ENCODE measurements at regions of chr5 and their contacts with region 1.

Region 1: DNA sequence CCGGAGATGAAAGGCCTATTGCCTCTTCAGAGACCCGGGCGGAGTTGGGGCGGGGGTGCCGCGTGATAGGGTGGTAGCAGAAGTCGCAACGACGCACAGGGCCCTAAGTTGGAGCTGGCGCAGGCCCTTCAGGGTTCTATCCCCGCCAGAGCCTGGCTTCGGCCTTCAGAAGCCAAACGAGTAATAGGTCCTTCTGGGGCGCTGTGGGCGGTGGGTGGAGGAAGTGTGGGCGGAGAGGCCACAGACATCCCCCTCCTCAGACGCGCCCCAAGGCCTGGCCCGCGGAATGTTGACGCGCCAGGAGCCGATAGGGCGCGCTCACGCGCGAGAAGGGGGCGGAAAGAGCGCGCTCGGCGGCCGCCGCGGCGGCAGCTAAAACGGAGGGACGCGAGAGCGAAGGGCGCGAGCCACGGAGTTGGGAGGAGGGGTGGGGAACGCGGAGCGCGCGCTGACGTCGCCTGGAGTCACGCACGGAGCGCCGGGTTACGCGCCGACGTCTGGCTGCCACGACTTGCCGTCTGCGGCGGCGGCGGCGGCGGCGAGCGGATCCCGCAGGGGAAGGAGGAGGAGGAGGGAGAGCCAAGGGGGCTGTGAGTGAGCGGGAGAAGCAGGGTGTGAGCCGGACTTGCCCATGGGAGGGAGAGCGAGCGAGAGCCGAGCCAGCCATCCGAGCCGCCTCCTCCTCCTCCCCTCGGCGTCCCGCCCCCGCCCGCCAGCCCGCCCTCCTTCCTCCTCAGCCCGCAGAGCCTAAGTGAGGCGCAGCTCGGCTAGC is 6.4 kb upstream of the PURA start:
- DNase-seq: peak; percentile 88 to 99 (median 93)
- ATAC-seq: peak; percentile 85
- H3K4me3 ChIP-seq: peak overlapping the region; percentile 63 to 81
- H3K4me3 Mint-ChIP-seq: peak overlapping the region; percentile 96
- H3K27ac ChIP-seq: peak overlapping the region; percentile 96 to 98
- H3K27ac Mint-ChIP-seq: peak overlapping the region; percentile 98
- H3K4me1 ChIP-seq: peaks cover 45% of the 10 kb centered on the region
- H3K4me1 Mint-ChIP-seq: peaks cover 48% of the 10 kb centered on the region
- H3K27me3 ChIP-seq: no peaks in the 10 kb centered on the region
- H3K27me3 Mint-ChIP-seq: peaks cover 20% of the 10 kb centered on the region
- CTCF ChIP-seq: no peak

Region 2: GRCh38 chr5:139844472-139845145 is 262.9 kb before region 1 on chr5:
- CTCF ChIA-PET with region 1: no interaction called
- POLR2A ChIA-PET with region 1: no interaction called
- intact Hi-C with region 1: loop called (anchors 5 kb)
- DNase-seq: peak; percentile 50 to 83 (median 77)
- ATAC-seq: peak; percentile 24
- H3K4me3 ChIP-seq: no peak overlapping the region
- H3K4me3 Mint-ChIP-seq: no peak overlapping the region
- H3K27ac ChIP-seq: no peak overlapping the region
- H3K27ac Mint-ChIP-seq: no peak overlapping the region
- H3K4me1 ChIP-seq: no peaks in the 10 kb centered on the region
- H3K4me1 Mint-ChIP-seq: peaks cover 15% of the 10 kb centered on the region
- H3K27me3 ChIP-seq: no peaks in the 10 kb centered on the region
- H3K27me3 Mint-ChIP-seq: peaks cover 18% of the 10 kb centered on the region
- CTCF ChIP-seq: peak; percentile 76

Region 3: GRCh38 chr5:140054086-140054689 is 53.3 kb before region 1 on chr5:
- CTCF ChIA-PET with region 1: no interaction called
- POLR2A ChIA-PET with region 1: no interaction called
- intact Hi-C with region 1: no loop called
- DNase-seq: no peak
- ATAC-seq: no peak
- H3K4me3 ChIP-seq: no peak overlapping the region
- H3K4me3 Mint-ChIP-seq: no peak overlapping the region
- H3K27ac ChIP-seq: no peak overlapping the region
- H3K27ac Mint-ChIP-seq: no peak overlapping the region
- H3K4me1 ChIP-seq: no peaks in the 10 kb centered on the region
- H3K4me1 Mint-ChIP-seq: no peaks in the 10 kb centered on the region
- H3K27me3 ChIP-seq: peaks cover 3 to 4% of the 10 kb centered on the region in 2 experiments
- H3K27me3 Mint-ChIP-seq: peaks cover 25% of the 10 kb centered on the region
- CTCF ChIP-seq: no peak

Region 4: DNA sequence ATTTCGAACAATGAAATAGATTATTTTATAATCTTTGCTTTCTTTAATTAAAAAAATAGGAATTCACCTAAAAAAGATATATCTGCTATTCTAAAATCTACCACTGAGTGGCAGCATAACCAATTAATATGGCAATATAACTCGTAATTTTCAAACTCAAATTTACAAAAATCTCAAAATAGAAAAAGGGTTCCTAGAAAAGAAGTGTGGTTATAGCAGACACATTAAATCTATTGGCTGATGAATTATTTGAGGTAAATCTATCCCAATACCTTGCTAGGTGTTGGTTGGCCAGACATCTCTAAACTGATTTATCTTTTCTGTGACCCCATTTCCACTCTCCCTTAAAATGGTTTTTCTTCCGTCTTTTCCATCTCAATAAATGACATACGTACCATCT is 34.2 kb before region 1 on chr5:
- CTCF ChIA-PET with region 1: interaction called, 18 read pairs
- POLR2A ChIA-PET with region 1: interaction called, 3 read pairs
- intact Hi-C with region 1: loop called (anchors 2 to 5 kb)
- DNase-seq: peak in 2 of 9 experiments; percentile 56 to 62
- ATAC-seq: no peak
- H3K4me3 ChIP-seq: no peak overlapping the region
- H3K4me3 Mint-ChIP-seq: no peak overlapping the region
- H3K27ac ChIP-seq: no peak overlapping the region
- H3K27ac Mint-ChIP-seq: no peak overlapping the region
- H3K4me1 ChIP-seq: no peaks in the 10 kb centered on the region
- H3K4me1 Mint-ChIP-seq: no peaks in the 10 kb centered on the region
- H3K27me3 ChIP-seq: peaks cover 0 to 12% of the 10 kb centered on the region in 2 experiments
- H3K27me3 Mint-ChIP-seq: peaks cover 28% of the 10 kb centered on the region
- CTCF ChIP-seq: peak; percentile 94

Region 5: DNA sequence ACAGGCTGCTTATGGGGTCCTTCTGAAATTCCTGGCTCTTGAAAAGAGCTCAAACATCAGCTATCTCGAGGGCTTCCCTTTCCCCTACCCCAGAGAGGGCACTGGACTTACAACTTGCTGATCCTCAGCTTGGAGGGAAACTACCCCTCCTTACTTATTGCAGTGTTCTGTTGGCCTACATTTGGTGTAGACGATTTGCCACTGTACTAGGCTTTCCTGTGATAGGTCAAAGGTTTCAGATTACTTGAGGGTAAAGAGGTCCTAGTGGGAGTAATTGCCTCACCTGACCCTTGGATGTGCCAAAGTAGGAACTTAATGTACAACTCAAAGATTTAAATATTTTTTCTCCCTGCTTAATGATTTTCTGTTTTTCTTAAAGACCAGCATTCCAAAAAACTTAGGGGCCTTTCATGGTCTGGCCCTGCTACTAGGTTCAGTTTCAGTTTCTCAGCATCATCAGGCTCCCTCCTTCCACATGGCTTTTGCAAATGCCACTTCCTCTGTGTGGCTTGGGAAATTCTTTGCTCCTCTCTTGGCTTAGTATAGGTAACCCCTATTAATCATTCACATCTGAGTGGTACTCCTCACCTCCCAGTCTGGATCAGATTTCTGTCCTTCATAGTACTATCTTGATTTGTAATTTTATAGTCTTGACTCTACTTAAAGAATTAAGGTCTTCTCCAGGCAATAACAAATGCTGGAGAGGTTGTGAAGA is 99.9 kb after region 1 on chr5:
- CTCF ChIA-PET with region 1: no interaction called
- POLR2A ChIA-PET with region 1: no interaction called
- intact Hi-C with region 1: no loop called
- DNase-seq: no peak
- ATAC-seq: no peak
- H3K4me3 ChIP-seq: no peak overlapping the region
- H3K4me3 Mint-ChIP-seq: no peak overlapping the region
- H3K27ac ChIP-seq: no peak overlapping the region
- H3K27ac Mint-ChIP-seq: no peak overlapping the region
- H3K4me1 ChIP-seq: no peaks in the 10 kb centered on the region
- H3K4me1 Mint-ChIP-seq: no peaks in the 10 kb centered on the region
- H3K27me3 ChIP-seq: no peaks in the 10 kb centered on the region
- H3K27me3 Mint-ChIP-seq: peaks cover 5% of the 10 kb centered on the region
- CTCF ChIP-seq: no peak

Region 6: DNA sequence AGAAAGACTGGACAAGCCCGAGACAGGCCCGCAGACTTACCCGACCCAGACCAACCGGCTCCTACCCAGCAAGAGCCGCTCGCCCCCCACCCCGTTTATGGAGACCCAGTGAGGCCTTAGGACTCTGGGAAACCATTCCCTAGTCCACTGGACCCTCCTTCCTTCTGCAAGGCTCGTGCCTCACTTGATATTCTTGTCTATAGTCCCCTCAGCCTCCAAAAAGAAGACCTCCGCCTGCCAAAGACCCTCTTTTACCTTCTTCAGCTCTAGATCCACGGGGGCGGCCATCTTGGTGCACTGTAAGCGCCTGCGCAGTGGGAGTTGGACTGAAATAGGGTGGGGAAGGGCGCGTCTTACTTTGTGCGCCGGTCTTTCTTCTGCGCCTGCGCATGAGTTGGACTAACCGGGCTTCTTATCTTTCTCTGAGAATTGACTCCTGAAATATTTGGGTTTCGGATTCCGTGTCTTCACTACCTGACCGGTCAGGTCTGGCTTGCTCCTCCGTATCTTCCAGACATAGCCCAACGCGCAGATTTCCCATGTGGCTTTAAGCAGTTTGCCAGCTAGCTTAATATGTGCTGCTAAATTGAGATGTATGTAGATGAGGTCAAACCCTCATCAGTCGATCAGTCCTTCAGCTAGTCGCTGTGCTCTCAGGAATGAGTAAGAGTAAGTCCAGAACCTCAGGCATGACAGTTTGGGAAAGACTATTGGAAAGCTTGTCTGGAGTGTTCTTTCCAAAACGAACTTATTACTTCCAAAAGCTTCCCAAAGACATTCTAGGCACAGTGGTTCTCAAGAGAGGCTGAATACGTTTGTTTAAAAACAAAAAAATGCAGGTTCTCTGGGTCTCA is 195.5 kb after region 1 on chr5 and contains the start of gene PFDN1:
- CTCF ChIA-PET with region 1: no interaction called
- POLR2A ChIA-PET with region 1: no interaction called
- intact Hi-C with region 1: loop called (anchors 5 kb)
- DNase-seq: peak; percentile 77 to 97 (median 90)
- ATAC-seq: peak; percentile 100
- H3K4me3 ChIP-seq: peak within 1 kb of the TSS; percentile 73 to 87
- H3K4me3 Mint-ChIP-seq: peak within 1 kb of the TSS; percentile 99
- H3K27ac ChIP-seq: peak within 1 kb of the TSS; percentile 61 to 82
- H3K27ac Mint-ChIP-seq: peak within 1 kb of the TSS; percentile 98
- H3K4me1 ChIP-seq: peaks cover 14% of the 10 kb centered on the region
- H3K4me1 Mint-ChIP-seq: peaks cover 29% of the 10 kb centered on the region
- H3K27me3 ChIP-seq: no peaks in the 10 kb centered on the region
- H3K27me3 Mint-ChIP-seq: peaks cover 4% of the 10 kb centered on the region
- CTCF ChIP-seq: no peak
- total RNA-seq, gene PFDN1: 28.4 to 30.5 TPM

Region 7: GRCh38 chr5:140557136-140557805 is 449.8 kb after region 1 on chr5 and contains the start of gene SRA1:
- CTCF ChIA-PET with region 1: no interaction called
- POLR2A ChIA-PET with region 1: no interaction called
- intact Hi-C with region 1: loop called (anchors 2 to 5 kb)
- DNase-seq: peak; percentile 53 to 90 (median 80)
- ATAC-seq: peak; percentile 83
- H3K4me3 ChIP-seq: peak within 1 kb of the TSS; percentile 87 to 97
- H3K4me3 Mint-ChIP-seq: peak within 1 kb of the TSS; percentile 91
- H3K27ac ChIP-seq: peak within 1 kb of the TSS; percentile 89 to 97
- H3K27ac Mint-ChIP-seq: peak within 1 kb of the TSS; percentile 96
- H3K4me1 ChIP-seq: peaks cover 28% of the 10 kb centered on the region
- H3K4me1 Mint-ChIP-seq: peaks cover 47% of the 10 kb centered on the region
- H3K27me3 ChIP-seq: no peaks in the 10 kb centered on the region
- H3K27me3 Mint-ChIP-seq: no peaks in the 10 kb centered on the region
- CTCF ChIP-seq: no peak
- total RNA-seq, gene SRA1: 33.7 to 37.2 TPM

Region 8: GRCh38 chr5:141326088-141326854 is 1218.8 kb after region 1 on chr5:
- CTCF ChIA-PET with region 1: no interaction called
- POLR2A ChIA-PET with region 1: no interaction called
- intact Hi-C with region 1: loop called in 1 of 2 experiments (anchors 5 kb)
- DNase-seq: peak; percentile 43 to 79 (median 73)
- ATAC-seq: peak; percentile 94
- H3K4me3 ChIP-seq: peak overlapping the region; percentile 42 to 56
- H3K4me3 Mint-ChIP-seq: peak overlapping the region; percentile 91
- H3K27ac ChIP-seq: peak overlapping the region; percentile 9 to 58
- H3K27ac Mint-ChIP-seq: peak overlapping the region; percentile 93
- H3K4me1 ChIP-seq: peaks cover 2% of the 10 kb centered on the region
- H3K4me1 Mint-ChIP-seq: peaks cover 8% of the 10 kb centered on the region
- H3K27me3 ChIP-seq: peaks cover 0 to 5% of the 10 kb centered on the region in 2 experiments
- H3K27me3 Mint-ChIP-seq: peaks cover 34% of the 10 kb centered on the region
- CTCF ChIP-seq: peak; percentile 62